Activated naive CD4-positive, alpha-beta T cell treated with anti-CD3 and anti-CD28 coated beads for 36 hours (primary cell): ENCODE measurements at regions of chr10 and their contacts with region 1.

Region 1: DNA sequence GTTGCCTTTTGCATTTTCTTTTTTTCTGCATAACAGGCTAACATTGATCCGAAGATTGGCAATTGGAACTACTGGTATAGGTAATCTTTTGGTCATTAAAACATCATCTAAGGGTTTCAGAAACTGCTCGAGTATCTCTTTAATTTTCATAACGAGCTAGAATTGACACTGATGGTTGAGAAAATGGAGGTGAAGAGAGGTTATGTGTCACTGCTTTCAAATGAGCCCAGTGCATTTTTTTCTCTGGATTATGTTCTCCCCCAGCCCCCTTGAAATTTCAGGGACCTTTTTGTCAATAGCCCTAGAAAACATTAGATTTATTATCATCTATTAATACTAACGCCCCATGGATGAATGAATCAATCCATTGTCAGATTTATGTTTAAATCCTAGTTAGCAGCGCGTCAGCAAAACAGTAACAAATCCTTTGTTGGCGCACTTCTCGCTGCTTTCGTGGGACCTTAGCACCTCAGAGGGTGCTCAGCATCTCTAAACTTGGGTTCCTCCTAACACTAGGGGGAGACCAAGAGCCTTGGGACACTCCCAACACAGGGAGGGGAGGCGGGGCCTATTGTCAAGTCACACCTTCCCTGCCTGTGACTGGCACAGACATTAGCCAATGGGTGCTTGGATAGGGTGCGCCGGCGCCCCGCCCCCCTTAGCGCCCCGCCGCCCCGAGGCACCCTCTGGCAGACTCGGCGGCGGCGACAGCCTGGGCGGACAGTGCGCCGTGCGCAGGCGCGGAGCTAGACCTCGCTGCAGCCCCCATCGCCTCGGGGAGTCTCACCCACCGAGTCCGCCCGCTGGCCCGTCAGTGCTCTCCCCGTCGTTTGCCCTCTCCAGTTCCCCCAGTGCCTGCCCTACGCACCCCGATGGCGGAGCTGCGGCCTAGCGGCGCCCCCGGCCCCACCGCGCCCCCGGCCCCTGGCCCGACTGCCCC is at the start of gene SUFU:
- DNase-seq: peak; percentile 99
- H3K4me3 Mint-ChIP-seq: peak within 1 kb of the TSS; percentile 94
- H3K27ac Mint-ChIP-seq: peak within 1 kb of the TSS; percentile 54
- H3K4me1 Mint-ChIP-seq: peaks cover 24% of the 10 kb centered on the region
- H3K27me3 Mint-ChIP-seq: no peaks in the 10 kb centered on the region
- total RNA-seq, gene SUFU: 6.6 to 7.1 TPM

Region 2: DNA sequence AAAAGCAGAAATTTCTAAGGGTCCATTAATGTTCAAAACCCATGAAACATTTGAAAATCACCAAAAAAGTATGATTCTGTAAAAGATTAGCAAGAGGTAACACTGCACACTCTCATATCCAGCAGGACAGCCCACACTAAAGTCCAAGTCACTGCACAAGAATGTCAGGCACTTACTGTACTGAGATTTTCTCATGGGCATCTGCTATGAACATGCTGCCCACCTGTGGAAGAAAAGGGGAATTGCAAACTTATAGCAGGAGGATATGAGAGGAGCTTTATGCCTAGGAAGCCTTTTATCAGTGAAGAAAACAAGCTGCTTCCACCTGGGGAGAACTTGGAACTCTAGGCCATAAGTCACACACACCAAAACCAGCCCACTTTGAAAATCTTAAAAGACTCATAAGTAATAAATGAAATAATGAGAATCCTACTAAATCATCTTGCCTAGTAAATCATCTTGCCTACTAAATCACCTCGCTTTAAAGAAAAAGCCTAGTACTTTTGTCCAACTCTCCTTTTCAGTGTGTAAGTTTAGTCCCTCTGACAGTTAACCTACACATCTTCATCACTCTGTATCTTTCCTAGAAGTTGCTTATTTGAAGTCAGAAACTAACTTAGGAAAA is 493.6 kb before region 1 on chr10:
- CTCF ChIA-PET with region 1: no interaction called
- intact Hi-C with region 1: no loop called
- DNase-seq: peak; percentile 56
- H3K4me3 Mint-ChIP-seq: no peak overlapping the region
- H3K27ac Mint-ChIP-seq: no peak overlapping the region
- H3K4me1 Mint-ChIP-seq: peaks cover 2% of the 10 kb centered on the region
- H3K27me3 Mint-ChIP-seq: no peaks in the 10 kb centered on the region

Region 3: GRCh38 chr10:102064868-102065560 is 438.5 kb before region 1 on chr10 and contains the start of gene HPS6:
- CTCF ChIA-PET with region 1: no interaction called
- intact Hi-C with region 1: loop called (anchors 1 kb)
- DNase-seq: peak; percentile 91
- H3K4me3 Mint-ChIP-seq: peak within 1 kb of the TSS; percentile 83
- H3K27ac Mint-ChIP-seq: peak within 1 kb of the TSS; percentile 88
- H3K4me1 Mint-ChIP-seq: peaks cover 24% of the 10 kb centered on the region
- H3K27me3 Mint-ChIP-seq: no peaks in the 10 kb centered on the region
- total RNA-seq, gene HPS6: 8.7 to 8.8 TPM

Region 4: GRCh38 chr10:102245101-102245931 is 258.2 kb before region 1 on chr10 and contains the start of gene GBF1:
- CTCF ChIA-PET with region 1: no interaction called
- intact Hi-C with region 1: loop called (anchors 1 kb)
- DNase-seq: peak; percentile 95
- H3K4me3 Mint-ChIP-seq: peak within 1 kb of the TSS; percentile 92
- H3K27ac Mint-ChIP-seq: peak within 1 kb of the TSS; percentile 86
- H3K4me1 Mint-ChIP-seq: peaks cover 41% of the 10 kb centered on the region
- H3K27me3 Mint-ChIP-seq: peaks cover 15% of the 10 kb centered on the region
- total RNA-seq, gene GBF1: 32.1 to 34.5 TPM

Region 5: DNA sequence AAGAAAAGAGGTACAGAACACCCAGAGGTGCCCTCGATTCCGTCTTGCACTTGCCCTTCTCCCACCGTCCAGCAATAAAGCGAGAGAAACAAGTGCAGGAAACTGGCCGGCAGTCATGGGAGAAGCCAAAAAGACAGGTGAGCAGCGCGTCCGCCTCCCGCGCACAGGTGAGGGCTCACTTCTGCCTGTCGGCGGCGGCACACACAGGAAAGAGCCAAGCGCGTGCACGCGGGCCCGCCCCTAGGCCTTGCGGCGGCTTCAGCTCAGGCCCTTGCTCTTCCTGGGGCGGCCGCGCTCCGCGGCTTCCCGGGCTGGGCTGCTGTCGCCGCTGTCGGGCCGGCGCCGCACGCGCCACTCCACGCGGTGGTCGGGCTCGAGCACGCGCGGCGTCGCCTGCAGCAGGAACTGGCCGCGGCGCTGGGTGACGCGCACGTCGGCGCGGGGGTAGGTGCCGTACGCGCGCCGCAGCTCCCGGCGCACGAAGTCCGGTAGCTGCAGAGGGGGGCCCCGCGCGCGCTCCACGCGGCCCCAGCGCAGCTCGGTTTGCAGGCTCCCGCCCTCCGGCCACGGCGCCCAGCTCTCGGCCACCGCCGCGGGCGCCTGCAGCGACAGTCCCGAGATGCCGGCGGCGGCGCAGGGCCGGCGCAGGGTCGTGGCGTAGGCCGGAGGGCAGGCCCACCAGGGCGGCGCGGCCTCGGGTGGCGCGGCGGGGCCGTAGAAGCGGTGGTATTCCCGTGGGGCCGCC is 53.2 kb before region 1 on chr10:
- CTCF ChIA-PET with region 1: no interaction called
- intact Hi-C with region 1: loop called (anchors 1 kb)
- DNase-seq: peak; percentile 82
- H3K4me3 Mint-ChIP-seq: peak overlapping the region; percentile 96
- H3K27ac Mint-ChIP-seq: peak overlapping the region; percentile 96
- H3K4me1 Mint-ChIP-seq: peaks cover 27% of the 10 kb centered on the region
- H3K27me3 Mint-ChIP-seq: no peaks in the 10 kb centered on the region

Region 6: GRCh38 chr10:102583435-102584417 is 80.2 kb after region 1 on chr10:
- CTCF ChIA-PET with region 1: interaction called, 86 read pairs
- intact Hi-C with region 1: loop called (anchors 1 kb)
- DNase-seq: peak; percentile 94
- H3K4me3 Mint-ChIP-seq: no peak overlapping the region
- H3K27ac Mint-ChIP-seq: no peak overlapping the region
- H3K4me1 Mint-ChIP-seq: peaks cover 5% of the 10 kb centered on the region
- H3K27me3 Mint-ChIP-seq: no peaks in the 10 kb centered on the region

Region 7: GRCh38 chr10:102713814-102714620 is 210.5 kb after region 1 on chr10 and contains the start of gene ARL3:
- CTCF ChIA-PET with region 1: interaction called, 3 read pairs
- intact Hi-C with region 1: loop called (anchors 1 kb)
- DNase-seq: peak; percentile 98
- H3K4me3 Mint-ChIP-seq: peak within 1 kb of the TSS; percentile 92
- H3K27ac Mint-ChIP-seq: peak within 1 kb of the TSS; percentile 79
- H3K4me1 Mint-ChIP-seq: peaks cover 44% of the 10 kb centered on the region
- H3K27me3 Mint-ChIP-seq: no peaks in the 10 kb centered on the region
- total RNA-seq, gene ARL3: 3.9 TPM

Region 8: DNA sequence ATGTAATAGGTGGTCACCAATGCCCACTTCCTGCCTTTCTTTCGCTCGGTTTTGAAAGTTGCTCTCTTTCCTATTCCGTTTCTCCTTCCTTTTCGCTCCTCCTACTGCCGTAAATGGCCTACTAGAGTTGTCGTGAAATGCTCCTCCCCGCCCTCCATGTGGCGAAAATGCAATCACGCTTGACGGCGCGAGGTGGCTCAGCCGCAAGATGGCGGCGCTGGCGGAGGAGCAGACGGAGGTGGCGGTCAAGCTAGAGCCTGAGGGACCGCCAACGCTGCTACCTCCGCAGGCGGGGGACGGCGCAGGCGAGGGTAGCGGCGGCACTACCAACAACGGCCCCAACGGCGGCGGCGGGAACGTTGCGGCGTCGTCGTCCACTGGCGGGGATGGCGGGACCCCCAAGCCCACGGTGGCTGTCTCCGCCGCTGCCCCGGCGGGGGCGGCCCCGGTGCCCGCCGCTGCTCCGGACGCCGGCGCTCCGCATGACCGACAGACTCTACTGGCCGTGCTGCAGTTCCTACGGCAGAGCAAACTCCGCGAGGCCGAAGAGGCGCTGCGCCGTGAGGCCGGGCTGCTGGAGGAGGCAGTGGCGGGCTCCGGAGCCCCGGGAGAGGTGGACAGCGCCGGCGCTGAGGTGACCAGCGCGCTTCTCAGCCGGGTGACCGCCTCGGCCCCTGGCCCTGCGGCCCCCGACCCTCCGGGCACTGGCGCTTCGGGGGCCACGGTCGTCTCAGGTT is 864.4 kb after region 1 on chr10 and contains the start of gene TAF5:
- CTCF ChIA-PET with region 1: no interaction called
- intact Hi-C with region 1: loop called (anchors 1 kb)
- DNase-seq: peak; percentile 95
- H3K4me3 Mint-ChIP-seq: peak within 1 kb of the TSS; percentile 85
- H3K27ac Mint-ChIP-seq: peak within 1 kb of the TSS; percentile 87
- H3K4me1 Mint-ChIP-seq: peaks cover 18% of the 10 kb centered on the region
- H3K27me3 Mint-ChIP-seq: no peaks in the 10 kb centered on the region
- total RNA-seq, gene TAF5: 16.3 TPM